MCF 10A (cell line): ENCODE measurements at regions of chr17 and their contacts with region 1.

Region 1: DNA sequence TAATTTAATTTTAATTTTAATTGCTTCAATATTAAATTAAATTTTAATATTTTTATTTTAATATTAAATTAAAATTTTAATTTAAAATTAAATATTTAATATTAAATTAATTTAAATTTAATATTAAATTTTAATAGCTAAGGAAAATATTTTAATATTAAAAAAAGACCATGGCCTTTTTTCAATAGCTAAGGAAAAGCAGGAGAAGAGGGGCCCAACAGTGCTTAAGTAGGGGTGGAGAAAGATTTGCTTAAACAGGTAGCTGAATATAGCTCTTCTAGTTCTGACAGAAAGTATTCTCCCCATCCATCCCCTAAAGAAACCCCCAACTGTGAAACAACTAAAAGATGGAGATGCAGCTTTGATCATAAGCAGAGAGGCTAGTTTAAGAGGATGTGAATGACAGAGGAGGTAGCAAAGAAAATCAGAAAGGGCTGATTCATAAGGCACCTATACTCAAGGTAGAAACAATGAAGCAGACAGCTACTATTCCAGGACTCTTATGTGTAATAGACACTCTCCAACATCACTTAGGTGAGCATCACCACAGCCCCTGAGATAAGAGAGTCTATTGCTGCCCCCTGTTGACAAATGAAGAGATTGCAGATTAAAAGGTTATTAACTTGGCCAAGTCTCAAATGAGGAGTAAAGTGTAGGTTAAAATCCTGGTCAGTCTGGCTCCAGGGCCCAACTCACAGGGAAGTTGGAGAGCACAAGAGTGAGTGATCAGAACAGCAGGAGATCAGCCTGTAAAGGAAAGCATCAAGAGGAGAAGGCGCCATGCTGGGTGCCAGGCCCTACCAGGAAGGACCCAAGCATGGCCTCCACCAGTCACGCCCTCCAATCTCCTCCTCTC is 7.8 kb upstream of the RNASEK start:
- DNase-seq: peak; percentile 82
- H3K4me3 Mint-ChIP-seq: no peak overlapping the region
- H3K27ac Mint-ChIP-seq: no peak overlapping the region
- H3K4me1 Mint-ChIP-seq: peaks cover 11% of the 10 kb centered on the region
- H3K27me3 Mint-ChIP-seq: no peaks in the 10 kb centered on the region
- CTCF ChIP-seq: peak; percentile 74

Region 2: DNA sequence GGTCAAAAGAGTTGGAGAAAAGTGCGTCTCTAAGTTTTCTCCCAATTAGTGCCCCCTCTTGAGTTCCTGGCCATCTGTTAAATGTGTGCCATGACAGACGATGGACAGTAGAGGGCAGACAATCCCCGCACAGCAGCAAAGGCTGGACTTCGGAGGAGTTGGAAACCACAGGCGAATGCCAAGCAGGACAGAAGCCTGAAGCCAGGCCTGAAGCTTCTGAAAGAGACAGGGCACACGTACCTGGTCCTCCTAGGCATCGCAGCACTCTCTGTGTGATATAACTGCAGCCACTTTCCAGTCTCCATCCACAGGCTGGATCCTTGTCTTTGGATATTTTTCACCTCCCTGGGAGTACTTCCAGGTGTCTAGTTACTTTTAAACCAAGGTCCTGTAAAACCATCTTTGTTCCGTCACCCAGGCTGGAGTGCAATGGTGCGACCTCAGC is 338.5 kb before region 1 on chr17:
- CTCF ChIA-PET with region 1: interaction called, 73 read pairs
- POLR2A ChIA-PET with region 1: interaction called, 12 read pairs
- intact Hi-C with region 1: loop called (anchors 1 kb)
- DNase-seq: peak; percentile 86
- H3K4me3 Mint-ChIP-seq: no peak overlapping the region
- H3K27ac Mint-ChIP-seq: no peak overlapping the region
- H3K4me1 Mint-ChIP-seq: peaks cover 30% of the 10 kb centered on the region
- H3K27me3 Mint-ChIP-seq: peaks cover 5% of the 10 kb centered on the region
- CTCF ChIP-seq: peak; percentile 93

Region 3: GRCh38 chr17:6913608-6914443 is 90.8 kb before region 1 on chr17:
- CTCF ChIA-PET with region 1: interaction called, 46 read pairs
- POLR2A ChIA-PET with region 1: interaction called, 4 read pairs
- intact Hi-C with region 1: loop called (anchors 1 kb)
- DNase-seq: peak; percentile 16
- H3K4me3 Mint-ChIP-seq: no peak overlapping the region
- H3K27ac Mint-ChIP-seq: no peak overlapping the region
- H3K4me1 Mint-ChIP-seq: no peaks in the 10 kb centered on the region
- H3K27me3 Mint-ChIP-seq: no peaks in the 10 kb centered on the region
- CTCF ChIP-seq: peak; percentile 51

Region 4: DNA sequence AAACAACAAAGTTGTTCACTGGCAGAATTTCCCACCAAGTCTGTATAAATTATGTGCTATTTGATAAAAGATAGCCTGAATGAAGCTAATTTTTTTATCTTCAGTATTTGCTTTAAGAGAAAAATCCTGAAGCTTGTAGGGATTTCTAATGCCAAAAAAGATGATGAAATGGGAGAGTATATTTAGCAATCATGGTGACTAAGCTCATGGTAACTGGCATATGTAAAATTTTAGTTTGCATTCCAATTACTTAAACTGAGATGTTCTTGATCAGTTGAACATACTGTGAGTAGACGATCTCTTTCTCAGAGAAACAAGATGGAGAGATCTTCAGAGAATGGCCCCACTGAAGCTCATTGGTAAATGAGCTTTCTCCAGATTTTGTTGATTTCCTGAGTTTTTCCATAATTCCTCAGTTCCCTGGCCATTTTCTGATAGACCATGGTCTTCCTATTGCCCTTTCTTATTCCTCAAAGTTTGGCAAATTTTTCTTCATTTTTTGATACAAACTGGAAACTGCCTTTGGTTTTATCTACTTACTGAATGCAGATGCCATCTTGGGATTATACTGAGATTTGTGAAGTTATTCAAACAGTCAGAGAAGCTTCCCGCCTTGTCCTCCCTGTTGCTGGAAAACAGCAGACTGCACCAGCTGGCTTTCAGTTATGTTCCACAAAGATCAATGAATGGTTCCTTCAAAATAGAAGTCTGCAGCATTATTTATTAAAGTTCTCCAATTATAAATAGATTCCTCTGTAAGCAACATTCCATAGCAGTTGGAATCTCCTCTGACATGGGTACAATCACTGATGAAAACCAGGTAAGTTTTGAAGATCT is 77.1 kb before region 1 on chr17:
- CTCF ChIA-PET with region 1: interaction called, 6 read pairs
- POLR2A ChIA-PET with region 1: interaction called, 12 read pairs
- intact Hi-C with region 1: no loop called
- DNase-seq: peak; percentile 73
- H3K4me3 Mint-ChIP-seq: no peak overlapping the region
- H3K27ac Mint-ChIP-seq: peak overlapping the region; percentile 51
- H3K4me1 Mint-ChIP-seq: peaks cover 16% of the 10 kb centered on the region
- H3K27me3 Mint-ChIP-seq: no peaks in the 10 kb centered on the region
- CTCF ChIP-seq: no peak

Region 5: DNA sequence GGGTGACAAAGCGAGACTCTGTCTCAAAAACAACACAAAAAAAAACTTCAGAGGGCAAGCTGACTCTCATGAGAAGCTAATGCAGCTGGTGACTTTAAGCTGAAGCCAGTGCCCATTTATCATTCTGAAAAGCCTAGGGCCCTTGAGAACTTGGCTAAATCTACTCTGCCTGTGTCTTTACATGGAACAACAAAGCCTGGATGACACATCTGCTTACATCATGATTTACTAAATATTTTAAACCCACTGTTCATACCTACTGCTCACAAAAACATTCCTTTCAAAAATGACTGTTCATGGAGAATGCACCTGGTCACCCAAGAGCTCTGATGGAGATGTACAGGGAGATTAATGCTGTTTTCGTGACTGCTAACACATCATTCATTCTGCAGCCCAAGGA is 14.8 kb before region 1 on chr17:
- CTCF ChIA-PET with region 1: interaction called, 16 read pairs
- POLR2A ChIA-PET with region 1: interaction called, 3 read pairs
- intact Hi-C with region 1: no loop called
- DNase-seq: peak; percentile 3
- H3K4me3 Mint-ChIP-seq: no peak overlapping the region
- H3K27ac Mint-ChIP-seq: no peak overlapping the region
- H3K4me1 Mint-ChIP-seq: no peaks in the 10 kb centered on the region
- H3K27me3 Mint-ChIP-seq: no peaks in the 10 kb centered on the region
- CTCF ChIP-seq: no peak

Region 6: DNA sequence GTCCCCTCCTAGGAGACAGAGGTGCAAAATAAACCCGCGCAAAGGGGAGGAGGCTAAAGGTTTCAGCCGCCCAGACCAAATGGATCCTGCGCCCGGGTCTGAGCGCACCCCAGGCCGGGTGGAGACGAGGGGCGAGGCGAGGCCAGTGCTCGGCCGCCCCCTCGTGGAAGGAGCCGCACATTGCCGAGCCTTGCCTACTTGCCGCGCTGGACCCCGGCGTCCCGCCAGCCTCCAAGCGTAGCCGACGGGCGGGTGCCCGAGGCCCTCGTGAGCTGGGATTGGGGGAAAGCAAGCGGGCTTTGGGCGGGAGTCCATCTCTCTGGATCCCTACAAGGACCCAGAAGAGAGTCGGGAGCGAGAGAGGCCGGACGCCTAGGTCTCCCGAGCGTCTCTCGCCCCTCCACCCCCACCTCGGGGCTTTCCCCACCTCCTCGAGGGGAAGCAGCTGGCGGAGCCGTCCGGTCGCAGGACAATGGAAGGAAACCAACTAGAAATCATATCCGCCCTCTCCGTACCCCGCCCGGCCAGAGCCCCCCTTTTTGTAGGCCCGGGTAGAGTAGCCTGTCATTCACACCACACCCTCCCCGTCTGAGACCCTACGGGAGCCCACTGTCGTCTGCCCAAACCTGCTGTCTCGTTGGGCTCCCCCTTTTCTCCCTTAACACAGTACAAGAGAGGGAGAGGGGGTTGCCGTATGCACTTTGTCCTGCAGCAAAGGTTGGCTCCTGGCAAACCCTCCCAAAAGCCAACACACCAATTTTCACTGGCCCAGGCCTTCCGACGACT is 17.6 kb after region 1 on chr17:
- CTCF ChIA-PET with region 1: interaction called, 27 read pairs
- POLR2A ChIA-PET with region 1: interaction called, 3 read pairs
- intact Hi-C with region 1: no loop called
- DNase-seq: peak; percentile 75
- H3K4me3 Mint-ChIP-seq: no peak overlapping the region
- H3K27ac Mint-ChIP-seq: no peak overlapping the region
- H3K4me1 Mint-ChIP-seq: peaks cover 23% of the 10 kb centered on the region
- H3K27me3 Mint-ChIP-seq: no peaks in the 10 kb centered on the region
- CTCF ChIP-seq: peak; percentile 84

Region 7: GRCh38 chr17:7413346-7413985 is 408.8 kb after region 1 on chr17:
- CTCF ChIA-PET with region 1: no interaction called
- POLR2A ChIA-PET with region 1: no interaction called
- intact Hi-C with region 1: no loop called
- DNase-seq: peak; percentile 33
- H3K4me3 Mint-ChIP-seq: no peak overlapping the region
- H3K27ac Mint-ChIP-seq: no peak overlapping the region
- H3K4me1 Mint-ChIP-seq: peaks cover 5% of the 10 kb centered on the region
- H3K27me3 Mint-ChIP-seq: no peaks in the 10 kb centered on the region
- CTCF ChIP-seq: no peak